ENCODE measurements at regions of chr18 and their contacts with region 1.

Region 1: DNA sequence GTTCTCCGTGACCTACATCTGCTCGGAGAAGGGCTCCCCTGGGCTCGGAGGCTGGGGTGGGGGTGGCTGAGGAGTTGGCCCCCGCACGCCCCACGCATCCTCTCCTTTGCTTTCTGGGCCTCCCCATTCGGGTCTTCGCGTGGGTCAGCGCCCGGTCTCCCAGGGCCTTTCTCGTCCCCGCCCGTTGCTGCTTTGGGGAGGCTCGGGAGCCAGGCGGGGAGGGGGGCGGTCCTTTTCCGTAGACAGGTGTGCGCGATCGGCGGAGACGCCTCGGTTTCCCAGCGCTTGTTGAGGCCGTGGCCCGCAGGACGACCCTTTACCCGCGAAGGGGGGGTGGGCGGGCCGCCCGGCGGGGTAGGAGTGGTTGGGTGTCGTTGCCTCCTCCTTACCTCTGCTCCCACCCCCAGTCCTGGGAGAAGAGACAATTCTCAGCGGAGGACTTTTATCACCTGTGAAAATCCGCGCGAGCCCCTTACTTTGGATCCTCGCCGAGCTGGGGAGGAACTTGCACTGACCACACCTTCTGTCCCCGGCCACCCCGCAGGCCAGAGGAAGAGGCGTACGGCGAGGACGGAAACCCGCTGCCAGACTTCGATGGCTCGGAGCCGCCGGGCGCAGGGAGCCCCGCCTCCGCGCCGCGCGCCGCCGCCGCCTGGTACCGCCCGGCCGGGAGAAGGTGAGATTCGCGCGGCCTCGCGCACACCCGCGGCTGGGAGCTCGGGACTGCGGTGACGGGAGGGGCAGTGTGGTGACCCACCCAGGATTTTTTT is 2.6 kb downstream of the ADCYAP1 start:
- DNase-seq: peak; percentile 73
- H3K4me3 Mint-ChIP-seq: peak overlapping the region; percentile 72
- H3K27ac Mint-ChIP-seq: no peak overlapping the region
- H3K4me1 Mint-ChIP-seq: peaks cover 9% of the 10 kb centered on the region
- H3K27me3 Mint-ChIP-seq: peaks cover 73% of the 10 kb centered on the region

Region 2: DNA sequence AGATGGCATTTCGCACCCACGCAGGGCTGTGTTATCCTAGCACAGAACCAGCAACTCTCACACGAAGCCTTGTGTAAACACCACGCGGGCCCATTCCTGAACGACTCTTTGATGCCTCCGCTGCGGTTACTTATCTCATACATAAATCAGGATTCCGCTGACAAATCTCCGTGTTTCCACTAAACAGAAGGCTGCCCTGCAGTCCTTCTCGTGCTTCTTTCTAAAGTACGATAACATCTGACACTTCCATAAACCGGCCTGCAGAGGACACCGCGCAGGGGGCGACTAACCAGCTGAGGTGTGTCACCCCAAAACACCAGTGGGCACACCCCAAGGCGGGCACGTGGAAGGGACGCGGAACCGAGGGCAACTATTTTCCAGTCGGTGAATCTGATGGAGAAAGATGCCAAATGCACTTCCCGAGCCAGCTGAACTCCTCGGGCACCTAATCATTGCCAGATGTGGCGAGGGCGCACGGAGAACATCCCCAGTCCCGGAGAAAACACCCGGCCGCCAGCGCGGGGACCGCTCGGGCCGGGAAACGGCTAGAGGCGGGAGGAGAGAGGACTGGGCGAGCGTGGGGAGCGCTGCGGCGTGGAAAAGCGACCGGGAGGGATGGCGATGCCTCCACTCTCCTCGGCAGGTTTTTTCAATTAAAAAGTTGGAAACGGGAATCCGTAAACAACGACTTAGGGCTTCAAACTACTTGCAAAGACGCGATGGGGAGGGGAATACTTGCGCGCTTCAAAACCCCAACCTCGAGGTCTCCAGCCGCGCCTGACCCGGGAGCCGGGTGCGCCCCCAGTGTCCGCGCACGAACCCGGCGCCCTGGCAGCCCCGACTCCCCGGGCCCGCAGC is 407.5 kb before region 1 on chr18:
- intact Hi-C with region 1: loop called (anchors 5 kb)
- DNase-seq: peak; percentile 51
- H3K4me3 Mint-ChIP-seq: no peak overlapping the region
- H3K27ac Mint-ChIP-seq: no peak overlapping the region
- H3K4me1 Mint-ChIP-seq: peaks cover 2% of the 10 kb centered on the region
- H3K27me3 Mint-ChIP-seq: peaks cover 34% of the 10 kb centered on the region

Region 3: GRCh38 chr18:845152-845819 is 62.0 kb before region 1 on chr18:
- intact Hi-C with region 1: no loop called
- DNase-seq: no peak
- H3K4me3 Mint-ChIP-seq: no peak overlapping the region
- H3K27ac Mint-ChIP-seq: no peak overlapping the region
- H3K4me1 Mint-ChIP-seq: peaks cover 2% of the 10 kb centered on the region
- H3K27me3 Mint-ChIP-seq: peaks cover 11% of the 10 kb centered on the region